ENCODE measurements at regions of chr2 and their contacts with region 1.

Region 1: GRCh38 chr2:183038341-183039300 is at the start of gene NCKAP1:
- DNase-seq: peak; percentile 83 to 86 (median 85)
- H3K4me3 ChIP-seq: peak within 1 kb of the TSS; percentile 2 to 66
- H3K4me3 Mint-ChIP-seq: peak within 1 kb of the TSS; percentile 83 to 96 (median 87)
- H3K27ac ChIP-seq: no peak within 1 kb of the TSS
- H3K27ac Mint-ChIP-seq: peak within 1 kb of the TSS; percentile 57 to 87 (median 72)
- H3K4me1 ChIP-seq: peaks cover 37% of the 10 kb centered on the region
- H3K4me1 Mint-ChIP-seq: peaks cover 26 to 38% (median 31%) of the 10 kb centered on the region in 4 donors
- H3K27me3 ChIP-seq: peaks cover 13% of the 10 kb centered on the region
- H3K27me3 Mint-ChIP-seq: peaks cover 22 to 28% of the 10 kb centered on the region in 2 donors
- total RNA-seq, gene NCKAP1: 4.9 to 6.3 TPM

Region 2: DNA sequence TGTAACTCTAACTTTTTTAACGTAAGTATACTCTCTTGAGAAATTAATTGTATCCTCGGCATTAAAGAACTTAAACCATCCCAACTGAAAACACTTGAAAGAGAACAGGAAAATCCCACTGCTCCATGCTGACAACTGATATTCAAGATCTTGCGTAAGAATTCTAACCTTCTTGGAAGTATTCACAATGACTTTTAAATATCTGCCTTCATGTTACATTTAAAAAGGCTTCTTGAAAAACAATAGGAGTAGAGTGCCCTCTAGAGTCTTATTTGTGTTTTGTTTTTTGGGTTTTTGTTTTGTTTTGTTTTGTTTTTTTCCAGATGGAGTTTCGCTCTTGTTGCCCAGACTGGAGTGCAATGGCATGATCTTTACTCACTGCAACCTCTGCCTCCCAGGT is 387.9 kb before region 1 on chr2:
- CTCF ChIA-PET with region 1: no interaction called
- POLR2A ChIA-PET with region 1: no interaction called
- intact Hi-C with region 1: no loop called
- DNase-seq: peak in 2 of 5 donors; percentile 12 to 27
- H3K4me3 ChIP-seq: no peak overlapping the region
- H3K4me3 Mint-ChIP-seq: no peak overlapping the region
- H3K27ac ChIP-seq: no peak overlapping the region
- H3K27ac Mint-ChIP-seq: peak overlapping the region in 3 of 7 donors; percentile 36 to 44 (median 39)
- H3K4me1 ChIP-seq: no peaks in the 10 kb centered on the region
- H3K4me1 Mint-ChIP-seq: peaks cover 10 to 21% (median 14%) of the 10 kb centered on the region in 4 donors
- H3K27me3 ChIP-seq: no peaks in the 10 kb centered on the region
- H3K27me3 Mint-ChIP-seq: peaks cover 0 to 4% of the 10 kb centered on the region in 2 donors

Region 3: DNA sequence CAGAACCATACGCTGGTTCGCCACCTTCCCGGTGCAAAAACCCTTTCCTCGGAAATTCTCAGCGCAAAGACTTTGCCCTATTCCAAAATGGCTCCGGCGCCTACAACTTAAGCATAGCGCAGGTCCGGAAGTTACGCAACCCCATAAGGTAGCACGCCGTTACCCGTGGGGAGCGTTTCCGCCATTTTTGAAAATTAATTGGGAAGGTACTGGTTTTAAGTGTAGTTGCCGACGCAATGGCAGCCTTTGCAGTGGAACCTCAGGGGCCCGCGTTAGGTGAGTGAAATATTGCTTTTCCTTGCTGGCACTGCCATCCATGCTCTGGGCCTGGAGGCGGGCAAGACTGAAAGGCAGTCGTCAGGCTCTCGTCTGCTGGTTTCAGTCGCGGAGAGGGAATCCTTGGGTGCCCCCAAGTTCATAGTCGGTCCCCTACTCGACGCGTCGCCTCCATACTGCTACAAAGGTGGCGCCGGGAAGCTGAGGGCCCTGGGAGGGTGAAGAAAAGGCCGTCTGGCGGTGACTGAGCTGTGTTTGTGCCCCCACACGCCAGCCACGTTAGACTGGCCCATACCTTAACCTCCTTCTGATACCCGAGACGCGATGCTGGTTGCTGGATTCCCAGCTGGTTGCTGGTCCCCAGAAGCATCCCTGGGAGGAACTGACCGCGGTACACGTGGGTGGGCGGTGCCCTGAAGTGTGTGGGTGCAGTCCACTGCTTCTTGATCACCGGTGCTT is 85.8 kb after region 1 on chr2 and contains the start of gene NUP35:
- CTCF ChIA-PET with region 1: interaction called, 3 read pairs
- POLR2A ChIA-PET with region 1: interaction called, 11 read pairs
- intact Hi-C with region 1: loop called (anchors 1 kb)
- DNase-seq: peak; percentile 85 to 87 (median 87)
- H3K4me3 ChIP-seq: peak within 1 kb of the TSS; percentile 85 to 94
- H3K4me3 Mint-ChIP-seq: peak within 1 kb of the TSS; percentile 93 to 98 (median 96)
- H3K27ac ChIP-seq: peak within 1 kb of the TSS; percentile 73
- H3K27ac Mint-ChIP-seq: peak within 1 kb of the TSS; percentile 97 to 98 (median 98)
- H3K4me1 ChIP-seq: peaks cover 24% of the 10 kb centered on the region
- H3K4me1 Mint-ChIP-seq: peaks cover 18 to 36% (median 31%) of the 10 kb centered on the region in 4 donors
- H3K27me3 ChIP-seq: no peaks in the 10 kb centered on the region
- H3K27me3 Mint-ChIP-seq: peaks cover 6% of the 10 kb centered on the region in 2 donors
- total RNA-seq, gene NUP35: 15.9 to 24.0 TPM

Measured in CD4-positive, alpha-beta memory T cell (primary cell).